CD4-positive, alpha-beta memory T cell (primary cell): ENCODE measurements at regions of chr2 and their contacts with region 1.

Region 1: DNA sequence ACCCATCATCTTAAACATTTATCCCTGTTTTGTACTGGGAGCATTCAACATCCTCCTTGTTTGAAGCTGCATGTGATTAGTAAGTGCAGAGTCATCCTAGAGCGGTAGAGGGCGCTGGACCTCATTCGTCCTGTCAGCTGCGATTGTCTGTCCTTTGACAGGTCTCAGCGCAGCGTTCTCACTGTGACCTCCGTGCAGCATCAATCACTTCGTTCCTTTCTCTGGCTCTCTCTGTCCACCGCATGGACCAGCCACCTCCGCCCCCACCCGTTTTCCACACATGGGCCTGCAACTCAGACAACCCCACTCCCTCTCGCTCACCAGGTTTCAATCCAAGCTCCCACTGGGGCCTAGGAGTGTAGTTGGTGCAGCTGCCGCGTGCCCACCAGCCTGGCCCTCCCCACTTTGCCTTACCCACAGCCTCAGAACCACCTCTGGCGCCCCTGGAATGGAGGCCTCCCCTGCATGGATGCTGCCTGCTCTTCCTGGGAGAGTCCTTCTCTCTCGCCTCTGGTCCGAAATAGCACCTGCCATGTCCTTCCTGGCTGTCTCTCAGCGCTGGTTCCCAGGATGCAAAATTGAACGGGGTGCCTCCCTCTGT is 90.5 kb downstream of the NDUFA10 start:
- DNase-seq: peak; percentile 51 to 59 (median 54)
- H3K4me3 ChIP-seq: no peak overlapping the region
- H3K4me3 Mint-ChIP-seq: peak overlapping the region in 5 of 8 donors; percentile 4 to 63 (median 52)
- H3K27ac ChIP-seq: no peak overlapping the region
- H3K27ac Mint-ChIP-seq: peak overlapping the region in 4 of 7 donors; percentile 41 to 83 (median 62)
- H3K4me1 ChIP-seq: no peaks in the 10 kb centered on the region
- H3K4me1 Mint-ChIP-seq: peaks cover 5 to 10% (median 6%) of the 10 kb centered on the region in 4 donors
- H3K27me3 ChIP-seq: no peaks in the 10 kb centered on the region
- H3K27me3 Mint-ChIP-seq: no peaks in the 10 kb centered on the region

Region 2: GRCh38 chr2:239457586-239458445 is 476.9 kb before region 1 on chr2:
- CTCF ChIA-PET with region 1: no interaction called
- POLR2A ChIA-PET with region 1: no interaction called
- intact Hi-C with region 1: no loop called
- DNase-seq: no peak
- H3K4me3 ChIP-seq: no peak overlapping the region
- H3K4me3 Mint-ChIP-seq: no peak overlapping the region
- H3K27ac ChIP-seq: no peak overlapping the region
- H3K27ac Mint-ChIP-seq: peak overlapping the region in 1 of 7 donors; percentile 21
- H3K4me1 ChIP-seq: no peaks in the 10 kb centered on the region
- H3K4me1 Mint-ChIP-seq: no peaks in the 10 kb centered on the region
- H3K27me3 ChIP-seq: peaks cover 3% of the 10 kb centered on the region
- H3K27me3 Mint-ChIP-seq: peaks cover 16% of the 10 kb centered on the region in 2 donors

Region 3: GRCh38 chr2:239569401-239570090 is 365.1 kb before region 1 on chr2:
- CTCF ChIA-PET with region 1: no interaction called
- POLR2A ChIA-PET with region 1: no interaction called
- intact Hi-C with region 1: no loop called
- DNase-seq: no peak
- H3K4me3 ChIP-seq: no peak overlapping the region
- H3K4me3 Mint-ChIP-seq: no peak overlapping the region
- H3K27ac ChIP-seq: no peak overlapping the region
- H3K27ac Mint-ChIP-seq: no peak overlapping the region
- H3K4me1 ChIP-seq: no peaks in the 10 kb centered on the region
- H3K4me1 Mint-ChIP-seq: no peaks in the 10 kb centered on the region
- H3K27me3 ChIP-seq: no peaks in the 10 kb centered on the region
- H3K27me3 Mint-ChIP-seq: no peaks in the 10 kb centered on the region

Region 4: GRCh38 chr2:239944694-239945551 is 10.3 kb after region 1 on chr2:
- CTCF ChIA-PET with region 1: interaction called, 18 read pairs
- POLR2A ChIA-PET with region 1: interaction called, 3 read pairs
- intact Hi-C with region 1: no loop called
- DNase-seq: peak; percentile 19 to 54 (median 30)
- H3K4me3 ChIP-seq: peak overlapping the region in 1 of 2 donors; percentile 35
- H3K4me3 Mint-ChIP-seq: peak overlapping the region; percentile 44 to 89 (median 73)
- H3K27ac ChIP-seq: peak overlapping the region; percentile 15
- H3K27ac Mint-ChIP-seq: peak overlapping the region in 6 of 7 donors; percentile 43 to 86 (median 70)
- H3K4me1 ChIP-seq: peaks cover 19% of the 10 kb centered on the region
- H3K4me1 Mint-ChIP-seq: peaks cover 5 to 23% (median 9%) of the 10 kb centered on the region in 4 donors
- H3K27me3 ChIP-seq: no peaks in the 10 kb centered on the region
- H3K27me3 Mint-ChIP-seq: no peaks in the 10 kb centered on the region